T-cell (primary cell): ENCODE measurements at regions of chr10 and their contacts with region 1.

Region 1: GRCh38 chr10:112949143-112949823 is 764 bp upstream of the TCF7L2 start:
- DNase-seq: peak in 1 of 35 experiments; percentile 32
- ATAC-seq: no peak
- H3K4me3 ChIP-seq: peak overlapping the region; percentile 34 to 74
- H3K4me3 Mint-ChIP-seq: peak overlapping the region; percentile 89 to 95 (median 95)
- H3K27ac ChIP-seq: peak overlapping the region; percentile 31
- H3K27ac Mint-ChIP-seq: peak overlapping the region in 1 of 2 donors; percentile 75
- H3K4me1 ChIP-seq: peaks cover 2 to 24% of the 10 kb centered on the region in 2 experiments
- H3K4me1 Mint-ChIP-seq: peaks cover 21 to 33% (median 25%) of the 10 kb centered on the region in 3 donors
- H3K27me3 ChIP-seq: peaks cover 0 to 30% of the 10 kb centered on the region in 2 experiments
- H3K27me3 Mint-ChIP-seq: peaks cover 4 to 25% of the 10 kb centered on the region in 2 donors

Region 2: GRCh38 chr10:112926906-112927688 is 22.2 kb before region 1 on chr10:
- CTCF ChIA-PET with region 1: interaction called in 1 of 2 experiments, 3 read pairs
- POLR2A ChIA-PET with region 1: interaction called in 1 of 2 experiments, 12 read pairs
- DNase-seq: no peak
- ATAC-seq: no peak
- H3K4me3 ChIP-seq: no peak overlapping the region
- H3K4me3 Mint-ChIP-seq: no peak overlapping the region
- H3K27ac ChIP-seq: no peak overlapping the region
- H3K27ac Mint-ChIP-seq: no peak overlapping the region
- H3K4me1 ChIP-seq: no peaks in the 10 kb centered on the region
- H3K4me1 Mint-ChIP-seq: no peaks in the 10 kb centered on the region
- H3K27me3 ChIP-seq: no peaks in the 10 kb centered on the region
- H3K27me3 Mint-ChIP-seq: peaks cover 1 to 7% of the 10 kb centered on the region in 2 donors

Region 3: DNA sequence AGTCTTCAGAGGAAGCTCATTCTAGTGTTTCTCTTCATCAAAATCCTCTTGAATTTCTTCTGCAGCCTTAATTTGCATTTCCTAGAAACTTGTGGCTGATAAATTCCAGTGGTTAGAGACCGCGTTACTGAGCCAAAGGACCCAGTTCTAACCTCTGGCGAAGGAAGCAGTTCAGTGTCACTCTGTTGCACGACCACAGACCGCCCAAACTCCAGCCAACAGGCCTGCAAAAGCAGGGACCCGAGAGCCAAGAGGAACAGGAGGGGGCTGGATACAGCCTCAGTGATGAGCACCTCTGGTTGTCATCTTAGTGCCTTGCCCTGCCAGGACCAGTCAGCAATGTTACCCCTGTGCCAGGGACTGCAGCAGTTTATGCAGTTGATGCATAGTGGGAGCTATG is 1385.0 kb after region 1 on chr10:
- CTCF ChIA-PET with region 1: no interaction called
- POLR2A ChIA-PET with region 1: no interaction called
- DNase-seq: no peak
- ATAC-seq: no peak
- H3K4me3 ChIP-seq: no peak overlapping the region
- H3K4me3 Mint-ChIP-seq: no peak overlapping the region
- H3K27ac ChIP-seq: no peak overlapping the region
- H3K27ac Mint-ChIP-seq: no peak overlapping the region
- H3K4me1 ChIP-seq: no peaks in the 10 kb centered on the region
- H3K4me1 Mint-ChIP-seq: no peaks in the 10 kb centered on the region
- H3K27me3 ChIP-seq: peaks cover 0 to 14% of the 10 kb centered on the region in 2 experiments
- H3K27me3 Mint-ChIP-seq: peaks cover 0 to 14% of the 10 kb centered on the region in 2 donors